ENCODE measurements at regions of chr1 and their contacts with region 1.

Region 1: GRCh38 chr1:109643385-109644230 is 12.3 kb upstream of the GSTM4 start:
- DNase-seq: no peak
- H3K4me3 ChIP-seq: no peak overlapping the region
- CTCF ChIP-seq: peak; percentile 94

Region 2: GRCh38 chr1:109548321-109549267 is 95.0 kb before region 1 on chr1 and contains the start of gene GNAI3:
- CTCF ChIA-PET with region 1: interaction called, 381 read pairs
- POLR2A ChIA-PET with region 1: interaction called, 11 read pairs
- DNase-seq: peak; percentile 72
- H3K4me3 ChIP-seq: peak within 1 kb of the TSS; percentile 95
- CTCF ChIP-seq: no peak

Region 3: DNA sequence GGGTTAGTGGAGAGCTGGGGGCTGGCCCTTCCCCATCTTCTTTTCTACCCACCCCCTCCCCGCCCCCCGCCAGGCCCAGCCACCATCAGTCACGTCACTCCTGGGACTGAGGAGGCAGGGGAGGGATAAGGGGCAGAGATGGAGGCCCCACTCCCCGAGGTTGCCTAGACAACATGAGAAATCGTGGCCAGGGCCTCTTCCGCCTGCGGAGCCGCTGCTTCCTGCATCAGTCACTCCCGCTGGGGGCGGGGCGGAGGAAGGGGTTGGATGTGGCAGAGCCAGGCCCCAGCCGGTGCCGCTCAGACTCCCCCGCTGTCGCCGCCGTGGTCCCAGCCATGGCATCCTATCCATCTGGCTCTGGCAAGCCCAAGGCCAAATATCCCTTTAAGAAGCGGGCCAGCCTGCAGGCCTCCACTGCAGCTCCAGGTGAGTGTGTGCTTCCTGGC is 22.7 kb before region 1 on chr1:
- CTCF ChIA-PET with region 1: interaction called, 371 read pairs
- POLR2A ChIA-PET with region 1: no interaction called
- DNase-seq: peak; percentile 76
- H3K4me3 ChIP-seq: peak overlapping the region; percentile 90
- CTCF ChIP-seq: no peak

Region 4: GRCh38 chr1:109721041-109721440 is 77.4 kb after region 1 on chr1:
- CTCF ChIA-PET with region 1: interaction called, 11 read pairs
- POLR2A ChIA-PET with region 1: no interaction called
- DNase-seq: no peak
- H3K4me3 ChIP-seq: no peak overlapping the region
- CTCF ChIP-seq: no peak

Region 5: DNA sequence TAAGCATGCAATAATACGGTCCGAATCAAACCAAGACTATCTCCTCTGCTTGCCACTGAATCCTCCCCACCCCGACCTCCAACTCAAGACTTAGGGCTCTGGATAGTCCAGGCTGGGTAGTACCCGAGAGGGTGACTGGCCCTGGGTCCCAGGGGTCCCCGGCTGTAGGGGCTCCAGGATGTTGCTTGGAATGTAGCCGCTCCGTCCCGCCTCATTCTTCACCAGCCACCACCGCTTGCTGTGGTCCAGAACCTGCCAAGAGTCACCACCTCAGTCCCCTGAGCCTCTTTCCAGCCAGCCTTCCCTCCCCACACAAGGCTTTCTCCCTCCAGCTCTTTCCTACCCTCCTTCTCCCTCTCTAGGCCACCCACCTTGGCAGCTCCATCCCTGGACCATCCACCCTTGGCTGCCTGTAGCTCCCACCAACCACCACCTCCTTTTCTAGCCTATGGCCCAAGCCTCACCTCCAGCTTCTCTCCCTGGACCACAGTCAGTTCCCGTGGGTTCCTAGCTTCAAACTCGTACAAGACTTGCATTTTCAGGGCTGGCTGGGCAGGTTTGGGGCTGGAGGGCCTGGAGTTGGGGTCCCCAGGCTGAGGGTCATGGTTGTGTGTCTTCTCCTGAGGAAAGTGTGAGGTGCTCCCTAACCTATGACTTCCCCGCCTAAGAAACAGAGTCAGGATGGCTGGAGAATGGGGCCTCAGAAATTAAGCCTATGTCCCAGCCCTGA is 108.1 kb after region 1 on chr1:
- CTCF ChIA-PET with region 1: interaction called, 13 read pairs
- POLR2A ChIA-PET with region 1: no interaction called
- DNase-seq: no peak
- H3K4me3 ChIP-seq: no peak overlapping the region
- CTCF ChIP-seq: no peak

Region 6: GRCh38 chr1:110003747-110004630 is 360.4 kb after region 1 on chr1:
- CTCF ChIA-PET with region 1: interaction called, 16 read pairs
- POLR2A ChIA-PET with region 1: no interaction called
- DNase-seq: peak; percentile 93
- H3K4me3 ChIP-seq: peak overlapping the region; percentile 48
- CTCF ChIP-seq: no peak